Activated CD4-positive, alpha-beta T cell treated with anti-CD3 and anti-CD28 coated beads, Interleukin-2, amount 10 ng/mL, durations not matched to agents 24 days and 14 days (primary cell): ENCODE measurements at regions of chr1 and their contacts with region 1.

Region 1: GRCh38 chr1:153404768-153405167 is 11.6 kb upstream of the S100A7A start:
- DNase-seq: peak; percentile 82
- H3K4me3 Mint-ChIP-seq: no peak overlapping the region
- H3K27ac Mint-ChIP-seq: no peak overlapping the region
- H3K4me1 Mint-ChIP-seq: peaks cover 2% of the 10 kb centered on the region
- H3K27me3 Mint-ChIP-seq: peaks cover 14% of the 10 kb centered on the region

Region 2: GRCh38 chr1:153155542-153155941 is 249.2 kb before region 1 on chr1:
- intact Hi-C with region 1: no loop called
- DNase-seq: no peak
- H3K4me3 Mint-ChIP-seq: no peak overlapping the region
- H3K27ac Mint-ChIP-seq: no peak overlapping the region
- H3K4me1 Mint-ChIP-seq: no peaks in the 10 kb centered on the region
- H3K27me3 Mint-ChIP-seq: peaks cover 13% of the 10 kb centered on the region

Region 3: DNA sequence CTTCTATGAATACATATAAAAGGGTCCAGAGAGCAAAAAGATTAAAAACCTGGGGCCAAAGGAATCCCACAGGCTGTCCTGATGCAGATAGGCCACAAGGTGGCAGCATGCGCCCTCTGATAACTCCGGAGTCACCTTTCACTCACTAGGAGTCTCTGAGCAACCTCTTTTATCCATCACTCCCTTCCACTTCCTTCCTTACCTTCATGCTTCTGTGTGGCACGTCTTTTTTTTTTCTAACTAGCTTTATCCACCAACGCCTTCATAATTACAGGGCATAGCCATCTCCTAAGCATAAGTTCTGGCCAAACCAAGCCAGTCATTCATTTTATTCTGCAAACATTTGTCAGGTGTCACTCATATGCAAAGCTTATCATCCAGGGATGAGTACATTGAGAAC is 52.2 kb before region 1 on chr1:
- intact Hi-C with region 1: loop called (anchors 1 kb)
- DNase-seq: peak; percentile 87
- H3K4me3 Mint-ChIP-seq: no peak overlapping the region
- H3K27ac Mint-ChIP-seq: no peak overlapping the region
- H3K4me1 Mint-ChIP-seq: peaks cover 4% of the 10 kb centered on the region
- H3K27me3 Mint-ChIP-seq: peaks cover 14% of the 10 kb centered on the region

Region 4: DNA sequence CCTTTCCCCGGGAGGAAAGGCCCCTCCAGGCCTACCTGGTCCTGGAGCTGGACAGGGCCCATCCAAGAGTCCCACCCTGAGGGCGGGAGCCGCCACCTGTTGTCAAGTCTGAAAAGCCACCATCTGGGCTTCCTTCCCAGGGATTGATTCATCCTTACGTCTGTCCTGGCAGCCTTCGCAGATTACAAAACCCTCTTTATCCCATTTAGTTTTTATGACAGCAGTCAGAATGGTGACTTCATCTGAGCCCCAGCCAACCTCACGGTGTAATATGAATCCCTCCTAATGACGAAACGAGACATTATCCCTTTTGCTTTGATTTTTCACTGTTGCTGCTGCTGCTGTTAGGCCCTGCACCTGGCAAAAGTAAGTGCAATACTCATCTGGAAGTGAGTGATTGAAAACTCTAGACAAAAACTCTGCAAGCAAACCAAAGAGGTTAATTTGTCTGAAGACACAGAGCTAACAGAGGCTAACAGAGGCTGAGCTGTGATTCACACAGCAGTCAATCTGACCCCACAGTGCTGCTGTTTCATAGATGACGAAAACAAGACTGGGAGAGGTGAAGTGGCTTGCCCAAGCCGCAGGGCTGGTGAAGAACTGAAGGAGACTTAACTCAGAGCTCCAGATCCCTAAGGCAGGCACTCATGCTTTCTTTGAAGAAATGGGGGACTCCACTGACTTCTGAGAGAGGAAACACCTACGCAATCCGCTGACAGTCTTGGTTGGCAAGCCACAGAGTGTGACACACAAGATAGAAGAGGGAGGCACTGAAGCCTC is 85.7 kb after region 1 on chr1:
- intact Hi-C with region 1: no loop called
- DNase-seq: no peak
- H3K4me3 Mint-ChIP-seq: no peak overlapping the region
- H3K27ac Mint-ChIP-seq: no peak overlapping the region
- H3K4me1 Mint-ChIP-seq: peaks cover 3% of the 10 kb centered on the region
- H3K27me3 Mint-ChIP-seq: peaks cover 28% of the 10 kb centered on the region